ENCODE measurements at regions of chr6 and their contacts with region 1.

Region 1: GRCh38 chr6:57021086-57021720 is 25.3 kb upstream of the KIAA1586 start:
- DNase-seq: peak; percentile 61
- CTCF ChIP-seq: peak; percentile 49

Region 2: GRCh38 chr6:57040009-57040408 is 18.8 kb after region 1 on chr6:
- CTCF ChIA-PET with region 1: interaction called, 27 read pairs
- POLR2A ChIA-PET with region 1: no interaction called
- DNase-seq: no peak
- CTCF ChIP-seq: no peak

Region 3: DNA sequence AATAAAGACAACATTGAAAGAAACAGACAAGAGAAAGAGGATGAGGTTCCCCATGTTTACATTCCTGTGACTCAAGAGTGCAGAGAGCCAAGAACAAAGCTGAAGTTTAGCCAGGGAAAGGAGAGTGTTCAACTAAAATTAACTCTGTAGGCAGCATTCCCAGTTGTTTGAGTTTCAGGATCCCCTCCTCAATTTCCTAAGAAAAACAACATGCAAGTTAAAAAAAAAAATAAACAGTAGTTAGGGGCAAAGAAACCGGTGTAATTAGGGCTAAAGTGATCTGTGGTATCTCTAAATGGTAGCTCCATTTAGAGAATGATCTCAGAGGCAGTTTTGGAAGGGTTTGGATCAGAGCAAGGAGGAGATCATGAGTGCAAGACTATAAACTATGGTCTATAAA is 231.8 kb after region 1 on chr6:
- CTCF ChIA-PET with region 1: no interaction called
- POLR2A ChIA-PET with region 1: no interaction called
- DNase-seq: no peak
- CTCF ChIP-seq: no peak

Measured in GM10248 (cell line).